ENCODE measurements at regions of chr1 and their contacts with region 1.

Region 1: DNA sequence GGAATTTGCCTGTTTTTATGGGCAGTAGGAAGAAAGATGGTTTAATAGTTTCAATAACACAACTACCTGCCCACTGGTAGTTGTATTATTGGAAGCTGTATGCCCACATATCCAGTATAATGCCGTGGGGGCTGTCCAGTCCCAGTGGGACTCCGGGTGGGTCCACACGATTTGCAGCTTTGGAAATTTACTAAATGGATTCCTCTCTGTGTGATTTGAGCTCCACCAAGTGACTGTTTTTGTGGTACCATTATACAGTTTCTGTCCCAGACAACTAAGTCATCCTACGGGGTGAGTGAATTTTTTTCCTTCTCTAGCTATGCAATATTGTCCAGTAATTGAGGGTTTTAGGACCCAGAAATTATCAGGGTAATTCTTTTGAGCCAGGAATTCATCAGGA is 86.8 kb downstream of the PLA2G4A start:
- DNase-seq: no peak
- H3K4me3 ChIP-seq: no peak overlapping the region
- H3K27ac ChIP-seq: no peak overlapping the region
- H3K4me1 ChIP-seq: no peaks in the 10 kb centered on the region
- H3K27me3 ChIP-seq: no peaks in the 10 kb centered on the region
- CTCF ChIP-seq: no peak
- POLR2A ChIP-seq: no peak

Region 2: DNA sequence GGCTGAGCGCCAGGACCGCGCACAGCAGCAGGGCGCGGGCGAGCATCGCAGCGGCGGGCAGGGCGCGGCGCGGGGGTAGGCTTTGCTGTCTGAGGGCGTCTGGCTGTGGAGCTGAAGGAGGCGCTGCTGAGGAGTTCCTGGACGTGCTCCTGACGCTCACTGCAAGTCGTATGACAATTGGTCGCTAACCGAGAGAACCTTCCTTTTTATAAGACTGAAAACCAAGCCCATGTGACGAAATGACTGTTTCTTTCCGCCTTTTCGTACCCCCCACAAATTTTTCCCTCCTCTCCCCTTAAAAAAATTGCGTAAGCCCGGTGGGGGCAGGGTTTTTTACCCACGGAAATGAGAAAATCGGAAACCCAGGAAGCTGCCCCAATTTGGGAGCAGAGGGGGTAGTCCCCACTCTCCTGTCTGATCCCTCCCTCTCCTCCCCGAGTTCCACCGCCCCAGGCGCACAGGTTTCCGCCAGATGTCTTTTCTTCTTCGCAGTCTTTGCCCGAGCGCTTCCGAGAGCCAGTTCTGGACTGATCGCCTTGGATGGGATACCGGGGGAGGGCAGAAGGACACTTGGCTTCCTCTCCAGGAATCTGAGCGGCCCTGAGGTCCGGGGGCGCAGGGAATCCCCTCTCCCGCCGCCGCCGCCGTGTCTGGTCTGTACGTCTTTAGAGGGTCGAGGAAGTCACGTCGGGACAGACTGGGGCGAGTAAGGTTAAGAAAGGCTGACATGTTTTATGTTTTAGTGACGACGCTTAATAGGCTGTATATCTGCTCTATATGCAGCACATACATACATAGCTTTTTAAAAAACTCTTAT is 235.1 kb before region 1 on chr1 and contains the start of gene PTGS2:
- intact Hi-C with region 1: no loop called
- DNase-seq: peak in 1 of 2 donors; percentile 95
- H3K4me3 ChIP-seq: peak within 1 kb of the TSS; percentile 59 to 74
- H3K27ac ChIP-seq: peak within 1 kb of the TSS; percentile 80
- H3K4me1 ChIP-seq: no peaks in the 10 kb centered on the region
- H3K27me3 ChIP-seq: no peaks in the 10 kb centered on the region
- CTCF ChIP-seq: peak in 2 of 3 experiments; percentile 26 to 49
- POLR2A ChIP-seq: peak in 1 of 2 donors; percentile 74
- total RNA-seq, gene PTGS2: 11.5 TPM

Region 3: DNA sequence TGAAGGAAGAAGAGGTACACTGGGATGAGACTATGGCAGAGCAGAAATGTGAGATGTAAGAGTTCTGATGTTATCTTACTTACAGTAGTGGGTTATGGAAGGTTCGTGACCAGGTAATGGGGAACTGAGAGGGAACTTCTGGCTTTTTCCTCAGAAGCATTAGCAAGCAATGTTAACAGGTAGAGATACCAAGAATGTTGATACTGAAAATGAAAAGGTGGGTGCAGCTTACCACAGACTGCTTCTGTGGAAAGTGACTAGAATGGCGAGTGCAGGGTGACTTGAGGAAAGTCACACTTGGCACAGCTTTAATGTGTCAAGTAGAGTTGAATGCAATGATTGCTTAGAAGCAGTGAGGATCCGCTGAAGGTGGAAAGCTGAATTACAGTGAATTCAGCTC is 16.0 kb before region 1 on chr1:
- intact Hi-C with region 1: loop called (anchors 2 kb)
- DNase-seq: no peak
- H3K4me3 ChIP-seq: no peak overlapping the region
- H3K27ac ChIP-seq: peak overlapping the region; percentile 59
- H3K4me1 ChIP-seq: peaks cover 34% of the 10 kb centered on the region
- H3K27me3 ChIP-seq: no peaks in the 10 kb centered on the region
- CTCF ChIP-seq: no peak
- POLR2A ChIP-seq: no peak